Calu3 (cell line): ENCODE measurements at regions of chr21 and their contacts with region 1.

Region 1: GRCh38 chr21:31088315-31088714 is 50.0 kb upstream of the KRTAP19-8 start:
- DNase-seq: peak; percentile 38
- H3K4me3 Mint-ChIP-seq: no peak overlapping the region
- H3K27ac Mint-ChIP-seq: no peak overlapping the region
- H3K4me1 Mint-ChIP-seq: no peaks in the 10 kb centered on the region
- H3K27me3 Mint-ChIP-seq: peaks cover 6% of the 10 kb centered on the region
- CTCF ChIP-seq: no peak

Region 2: GRCh38 chr21:30340441-30341241 is 747.7 kb before region 1 on chr21:
- CTCF ChIA-PET with region 1: no interaction called
- intact Hi-C with region 1: loop called (anchors 1 kb)
- DNase-seq: peak; percentile 33
- H3K4me3 Mint-ChIP-seq: no peak overlapping the region
- H3K27ac Mint-ChIP-seq: no peak overlapping the region
- H3K4me1 Mint-ChIP-seq: no peaks in the 10 kb centered on the region
- H3K27me3 Mint-ChIP-seq: no peaks in the 10 kb centered on the region
- CTCF ChIP-seq: peak; percentile 71